ENCODE measurements at regions of chr19 and their contacts with region 1.

Region 1: GRCh38 chr19:7970716-7971448 is 27.4 kb upstream of the TIMM44 start:
- DNase-seq: no peak
- H3K4me3 ChIP-seq: no peak overlapping the region
- H3K27ac ChIP-seq: no peak overlapping the region
- H3K27me3 ChIP-seq: no peaks in the 10 kb centered on the region
- CTCF ChIP-seq: peak; percentile 81

Region 2: DNA sequence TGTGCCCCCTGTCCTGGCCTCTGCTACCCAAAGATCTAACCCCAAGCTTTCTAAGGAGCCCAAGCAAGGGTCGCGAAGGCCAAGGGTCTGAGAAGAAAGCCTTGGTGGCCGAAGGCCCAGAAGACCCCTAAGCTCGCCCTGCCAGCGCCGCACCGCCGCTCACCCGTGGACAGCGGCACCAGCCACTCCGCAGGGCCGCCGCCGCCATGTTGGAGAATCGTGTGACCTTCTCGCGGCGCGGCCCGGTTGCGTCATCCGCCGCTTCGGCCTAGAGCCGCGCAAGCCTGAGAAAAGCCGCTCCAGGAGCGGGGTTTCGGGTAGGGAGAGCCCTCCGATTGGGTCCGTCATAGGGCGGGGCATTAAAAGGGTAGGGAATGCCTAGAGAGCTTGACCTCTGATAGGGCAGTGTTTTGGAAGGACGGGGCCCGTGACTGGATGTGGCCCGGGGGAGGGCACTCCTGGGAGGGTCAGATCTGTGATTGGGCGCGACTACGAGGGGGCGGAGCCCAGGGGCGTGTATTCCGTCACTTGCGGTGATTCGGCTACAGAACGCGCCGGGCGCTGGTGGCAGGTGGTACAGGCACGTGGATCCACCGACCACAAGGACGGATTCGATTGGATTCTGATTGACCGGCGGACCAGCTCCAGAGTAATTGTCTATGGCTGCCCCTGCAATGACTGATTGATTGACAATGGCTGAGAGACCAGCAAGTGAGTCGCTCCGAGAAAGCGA is 27.3 kb before region 1 on chr19 and contains the start of gene TIMM44:
- CTCF ChIA-PET with region 1: interaction called, 39 read pairs
- POLR2A ChIA-PET with region 1: interaction called, 7 read pairs
- DNase-seq: peak; percentile 99
- H3K4me3 ChIP-seq: peak within 1 kb of the TSS; percentile 96
- H3K27ac ChIP-seq: peak within 1 kb of the TSS; percentile 93
- H3K27me3 ChIP-seq: no peaks in the 10 kb centered on the region
- CTCF ChIP-seq: no peak
- polyA plus RNA-seq, gene TIMM44: 42.0 and 43.3 TPM in 2 replicates

Region 3: DNA sequence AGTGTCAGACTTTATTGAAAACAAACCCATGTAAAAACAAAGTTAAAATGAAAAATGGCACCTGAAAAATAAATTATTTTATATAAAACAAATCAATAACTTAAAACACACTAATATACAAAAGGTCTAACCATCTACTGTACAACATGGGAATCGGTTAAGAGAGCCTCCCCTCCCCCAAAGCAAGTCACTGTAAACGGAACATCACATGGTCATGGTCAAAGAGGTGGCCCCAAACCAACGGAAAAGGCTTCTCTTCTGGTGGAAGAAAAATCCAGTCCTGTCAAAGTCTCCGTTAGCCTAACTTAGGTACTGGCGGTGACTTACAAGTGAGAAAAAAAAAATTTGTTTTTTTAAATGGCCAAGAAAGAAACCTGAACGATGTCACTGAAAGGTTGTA is 11.7 kb before region 1 on chr19:
- CTCF ChIA-PET with region 1: interaction called, 13 read pairs
- POLR2A ChIA-PET with region 1: no interaction called
- DNase-seq: no peak
- H3K4me3 ChIP-seq: no peak overlapping the region
- H3K27ac ChIP-seq: no peak overlapping the region
- H3K27me3 ChIP-seq: no peaks in the 10 kb centered on the region
- CTCF ChIP-seq: no peak

Region 4: GRCh38 chr19:8036434-8037099 is 65.7 kb after region 1 on chr19:
- CTCF ChIA-PET with region 1: no interaction called
- POLR2A ChIA-PET with region 1: no interaction called
- DNase-seq: no peak
- H3K4me3 ChIP-seq: no peak overlapping the region
- H3K27ac ChIP-seq: no peak overlapping the region
- H3K27me3 ChIP-seq: peaks cover 11% of the 10 kb centered on the region
- CTCF ChIP-seq: no peak

Region 5: DNA sequence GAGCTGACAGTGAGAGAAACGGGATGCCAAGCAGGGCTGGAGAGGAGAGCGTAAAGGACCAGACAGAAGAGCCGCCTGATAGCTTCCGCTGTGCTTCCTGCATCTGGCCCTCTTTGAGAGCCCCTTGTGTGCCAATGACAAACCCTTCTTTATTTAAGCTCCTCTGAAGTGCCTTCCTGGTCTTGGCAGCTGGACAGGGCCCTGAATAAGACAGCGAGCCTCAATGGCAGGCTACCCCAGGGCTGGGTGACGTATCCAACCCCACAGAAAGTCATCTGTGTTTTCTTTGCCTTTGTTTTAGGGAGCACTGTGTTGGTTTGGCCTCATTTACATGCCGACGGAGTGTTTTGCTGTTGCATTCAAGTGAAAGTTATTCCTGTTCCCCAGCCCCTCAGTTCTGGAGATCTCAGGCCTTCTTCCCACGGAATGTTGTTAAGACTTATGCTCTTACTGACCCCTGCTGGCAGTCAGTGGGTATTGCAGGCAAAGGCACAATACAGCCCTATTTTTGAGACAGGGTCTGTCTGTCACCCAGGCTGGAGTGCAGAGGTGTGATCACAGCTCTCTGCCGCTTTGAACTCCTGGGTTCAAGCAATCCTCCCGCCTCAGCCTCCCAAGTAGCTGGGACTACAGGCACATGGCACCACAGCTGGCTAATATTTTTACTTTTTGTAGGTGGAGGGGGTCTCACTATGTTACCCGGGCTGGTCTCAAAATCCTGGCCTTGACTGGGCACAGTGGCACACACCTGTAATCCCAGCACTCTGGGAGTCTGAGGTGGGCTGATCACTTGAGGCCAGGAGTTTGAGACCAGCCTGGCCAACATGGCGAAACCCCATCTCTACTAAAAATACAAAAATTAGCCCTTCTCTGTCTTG is 98.5 kb after region 1 on chr19:
- CTCF ChIA-PET with region 1: no interaction called
- POLR2A ChIA-PET with region 1: no interaction called
- DNase-seq: no peak
- H3K4me3 ChIP-seq: no peak overlapping the region
- H3K27ac ChIP-seq: no peak overlapping the region
- H3K27me3 ChIP-seq: no peaks in the 10 kb centered on the region
- CTCF ChIP-seq: peak; percentile 54

Region 6: GRCh38 chr19:8208922-8209461 is 238.1 kb after region 1 on chr19 and contains the start of gene CERS4:
- CTCF ChIA-PET with region 1: interaction called, 11 read pairs
- POLR2A ChIA-PET with region 1: no interaction called
- DNase-seq: no peak
- H3K4me3 ChIP-seq: peak within 1 kb of the TSS; percentile 56
- H3K27ac ChIP-seq: no peak within 1 kb of the TSS
- H3K27me3 ChIP-seq: peaks cover 28% of the 10 kb centered on the region
- CTCF ChIP-seq: no peak
- polyA plus RNA-seq, gene CERS4: 4.7 and 5.4 TPM in 2 replicates

Region 7: DNA sequence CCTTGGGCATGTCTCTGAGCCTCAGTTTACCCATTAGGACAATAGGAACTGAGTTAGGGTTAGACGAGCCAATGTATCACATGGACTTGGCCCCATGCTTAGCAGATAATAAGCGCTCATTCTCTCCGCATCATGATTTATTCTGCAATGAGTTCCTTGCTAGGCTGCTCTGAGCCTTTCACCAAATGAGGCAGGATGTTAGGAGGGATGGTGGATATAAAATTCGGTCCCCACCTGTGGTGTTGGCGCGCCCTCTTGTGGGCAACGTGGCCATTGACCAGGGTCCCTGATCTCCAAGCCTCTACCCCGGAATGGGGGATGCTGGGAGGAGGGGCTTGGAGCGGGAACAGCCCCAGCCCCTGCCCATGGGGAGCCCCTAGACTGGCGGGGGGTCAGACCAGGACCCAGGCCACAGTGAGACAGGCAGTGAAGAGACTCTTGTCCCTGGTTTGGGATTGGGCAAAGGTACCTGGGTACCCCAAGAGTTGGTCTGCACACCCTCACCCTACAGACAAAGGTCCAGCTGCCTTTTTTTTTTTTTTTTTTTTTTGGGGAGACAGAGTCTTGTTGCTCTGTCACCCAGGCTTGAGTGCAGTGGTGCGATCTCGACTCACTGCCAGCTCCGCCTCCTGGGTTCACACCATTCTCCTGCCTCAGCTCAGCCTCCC is 282.2 kb after region 1 on chr19:
- CTCF ChIA-PET with region 1: interaction called, 14 read pairs
- POLR2A ChIA-PET with region 1: no interaction called
- DNase-seq: peak; percentile 38
- H3K4me3 ChIP-seq: no peak overlapping the region
- H3K27ac ChIP-seq: no peak overlapping the region
- H3K27me3 ChIP-seq: peaks cover 2% of the 10 kb centered on the region
- CTCF ChIP-seq: peak; percentile 99

Measured in AG04450 (cell line).